ENCODE measurements at regions of chr15 and their contacts with region 1.

Region 1: GRCh38 chr15:101008158-101009139 is 89.3 kb downstream of the LRRK1 start:
- DNase-seq: peak; percentile 82
- H3K4me3 ChIP-seq: peak overlapping the region; percentile 52 to 72 (median 64)
- H3K27ac ChIP-seq: no peak overlapping the region
- H3K4me1 ChIP-seq: peaks cover 24% of the 10 kb centered on the region
- H3K27me3 ChIP-seq: no peaks in the 10 kb centered on the region
- CTCF ChIP-seq: peak; percentile 93 to 99

Region 2: DNA sequence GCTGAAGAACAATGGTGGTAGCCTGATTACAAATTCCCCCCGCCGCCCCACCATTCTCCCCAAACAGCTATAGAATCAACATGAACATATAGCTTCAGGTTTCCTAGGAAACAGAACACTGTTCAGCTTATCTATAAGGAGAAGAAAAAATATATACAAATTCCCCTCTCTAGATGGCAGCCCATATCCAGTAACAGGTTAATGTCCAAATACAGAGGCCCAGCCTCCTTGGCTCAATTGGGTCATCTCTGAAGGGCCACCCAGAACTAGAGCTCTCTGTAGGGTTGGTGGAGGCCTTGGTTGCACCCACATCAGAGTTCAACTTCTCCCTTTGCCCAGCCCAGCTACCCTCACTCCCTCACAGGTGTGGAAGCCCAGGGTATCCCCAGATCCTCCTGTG is 575.1 kb before region 1 on chr15:
- CTCF ChIA-PET with region 1: no interaction called
- dilution Hi-C with region 1: no loop called
- in situ Hi-C with region 1: no loop called
- intact Hi-C with region 1: loop called (anchors 5 kb)
- DNase-seq: peak; percentile 8
- H3K4me3 ChIP-seq: no peak overlapping the region
- H3K27ac ChIP-seq: no peak overlapping the region
- H3K4me1 ChIP-seq: no peaks in the 10 kb centered on the region
- H3K27me3 ChIP-seq: no peaks in the 10 kb centered on the region
- CTCF ChIP-seq: peak in 1 of 2 donors; percentile 30

Region 3: DNA sequence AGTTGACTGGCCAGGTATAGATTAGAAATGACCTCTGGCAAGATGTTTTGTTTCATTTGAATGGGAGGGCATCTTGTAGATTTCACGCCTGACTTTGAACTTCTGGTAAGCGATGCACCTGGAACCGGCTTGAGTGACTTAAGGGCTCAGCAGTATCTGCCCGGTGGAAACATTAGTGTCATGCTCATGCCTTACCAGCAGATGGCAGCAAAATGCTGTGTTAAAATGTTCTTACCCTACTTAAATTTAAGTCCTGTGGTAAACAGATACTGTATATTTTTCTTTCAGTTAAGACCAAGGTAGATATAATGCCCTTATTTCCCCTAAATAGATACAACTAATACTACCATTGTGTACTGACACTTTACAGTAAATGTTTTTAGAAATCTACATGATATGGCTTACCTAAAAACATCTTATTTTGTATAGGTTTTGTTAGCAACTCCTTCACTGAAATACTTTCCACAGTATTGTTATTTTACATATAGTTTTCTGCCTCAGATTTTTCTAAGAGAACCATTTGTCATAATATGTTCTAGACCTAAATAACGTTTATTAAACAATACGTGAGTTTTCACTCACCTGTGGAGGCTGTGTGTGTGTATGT is 380.6 kb before region 1 on chr15:
- CTCF ChIA-PET with region 1: interaction called, 3 read pairs
- dilution Hi-C with region 1: no loop called
- in situ Hi-C with region 1: loop called (anchors 10 kb)
- intact Hi-C with region 1: loop called (anchors 1 kb)
- DNase-seq: peak; percentile 64
- H3K4me3 ChIP-seq: no peak overlapping the region
- H3K27ac ChIP-seq: peak overlapping the region; percentile 5
- H3K4me1 ChIP-seq: no peaks in the 10 kb centered on the region
- H3K27me3 ChIP-seq: no peaks in the 10 kb centered on the region
- CTCF ChIP-seq: peak; percentile 73

Region 4: DNA sequence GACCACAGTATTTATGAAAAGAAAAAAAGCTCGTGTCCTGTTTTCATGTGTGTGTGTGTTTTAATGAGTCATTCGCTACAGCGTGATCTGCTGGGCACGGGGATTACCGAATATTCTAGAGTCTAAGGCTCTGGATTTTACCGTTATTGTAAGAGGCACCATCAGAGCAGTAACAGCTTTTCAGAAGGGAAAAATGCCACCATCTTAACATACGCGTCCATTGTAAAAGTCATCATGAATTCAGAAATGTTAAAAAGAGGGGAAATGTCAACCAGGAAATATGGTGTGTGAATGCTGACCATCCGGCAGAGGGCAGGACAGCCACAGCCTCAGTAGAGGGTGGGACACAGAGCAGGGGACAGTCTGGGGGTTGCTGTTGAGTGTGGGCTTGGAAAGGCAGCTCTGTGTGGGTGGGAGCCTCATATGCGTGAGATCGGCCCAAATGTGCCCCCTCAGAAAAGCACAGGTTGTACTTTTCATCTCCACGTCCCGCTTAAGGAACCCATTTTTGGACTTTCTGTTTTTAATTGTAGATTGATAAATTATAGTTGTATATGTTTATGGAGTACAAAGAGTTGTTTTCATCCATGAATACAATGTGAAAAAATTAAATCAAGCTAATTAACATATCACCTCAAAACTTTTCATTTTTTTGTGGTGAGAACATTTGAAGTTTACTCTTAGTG is 336.4 kb before region 1 on chr15:
- CTCF ChIA-PET with region 1: no interaction called
- dilution Hi-C with region 1: no loop called
- in situ Hi-C with region 1: no loop called
- intact Hi-C with region 1: loop called (anchors 1 kb)
- DNase-seq: peak; percentile 49
- H3K4me3 ChIP-seq: no peak overlapping the region
- H3K27ac ChIP-seq: peak overlapping the region; percentile 37
- H3K4me1 ChIP-seq: peaks cover 7% of the 10 kb centered on the region
- H3K27me3 ChIP-seq: no peaks in the 10 kb centered on the region
- CTCF ChIP-seq: peak; percentile 44 to 66

Region 5: DNA sequence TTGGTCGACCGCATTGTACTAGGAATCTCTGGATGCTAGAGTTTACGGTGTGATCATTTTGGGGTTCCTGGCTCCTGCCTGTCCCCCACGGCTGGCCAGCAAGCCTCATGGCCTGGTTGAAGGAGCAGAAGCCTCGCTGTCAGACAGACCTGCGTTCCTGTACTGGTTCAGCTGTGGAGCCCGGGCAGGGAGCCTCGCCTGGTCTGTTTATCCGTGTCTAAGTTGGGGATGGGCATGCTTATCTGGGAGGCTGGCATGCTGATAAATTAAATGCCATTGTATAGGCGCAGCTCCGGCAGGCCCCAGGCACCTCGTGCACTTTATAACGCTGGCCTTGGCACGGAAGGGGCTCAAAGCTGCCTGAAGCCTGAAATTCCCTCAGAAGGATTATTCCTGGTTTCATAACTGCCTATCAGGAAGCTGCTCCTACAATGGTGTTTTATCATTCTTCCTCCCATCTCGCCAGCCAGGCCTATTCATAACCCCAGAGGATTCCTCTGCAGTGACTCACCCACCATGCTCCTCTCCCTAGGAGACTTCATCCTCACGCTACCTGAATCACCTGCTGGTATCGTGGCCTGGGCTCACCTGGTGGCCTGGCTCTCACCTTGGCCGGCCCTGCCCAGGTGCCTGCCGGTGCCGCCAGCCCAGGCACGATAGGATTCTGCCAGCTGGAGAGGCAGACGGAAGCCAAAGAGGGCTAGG is 295.1 kb before region 1 on chr15:
- CTCF ChIA-PET with region 1: no interaction called
- dilution Hi-C with region 1: no loop called
- in situ Hi-C with region 1: no loop called
- intact Hi-C with region 1: loop called (anchors 2 kb)
- DNase-seq: peak; percentile 100
- H3K4me3 ChIP-seq: no peak overlapping the region
- H3K27ac ChIP-seq: peak overlapping the region; percentile 99
- H3K4me1 ChIP-seq: peaks cover 33% of the 10 kb centered on the region
- H3K27me3 ChIP-seq: no peaks in the 10 kb centered on the region
- CTCF ChIP-seq: no peak

Region 6: GRCh38 chr15:100918034-100918689 is 90.3 kb before region 1 on chr15:
- CTCF ChIA-PET with region 1: interaction called, 24 read pairs
- dilution Hi-C with region 1: no loop called
- in situ Hi-C with region 1: loop called (anchors 5 to 10 kb)
- intact Hi-C with region 1: loop called (anchors 1 kb)
- DNase-seq: peak; percentile 77
- H3K4me3 ChIP-seq: peak overlapping the region; percentile 64 to 72 (median 67)
- H3K27ac ChIP-seq: peak overlapping the region; percentile 48
- H3K4me1 ChIP-seq: peaks cover 39% of the 10 kb centered on the region
- H3K27me3 ChIP-seq: no peaks in the 10 kb centered on the region
- CTCF ChIP-seq: peak; percentile 83 to 94

Region 7: DNA sequence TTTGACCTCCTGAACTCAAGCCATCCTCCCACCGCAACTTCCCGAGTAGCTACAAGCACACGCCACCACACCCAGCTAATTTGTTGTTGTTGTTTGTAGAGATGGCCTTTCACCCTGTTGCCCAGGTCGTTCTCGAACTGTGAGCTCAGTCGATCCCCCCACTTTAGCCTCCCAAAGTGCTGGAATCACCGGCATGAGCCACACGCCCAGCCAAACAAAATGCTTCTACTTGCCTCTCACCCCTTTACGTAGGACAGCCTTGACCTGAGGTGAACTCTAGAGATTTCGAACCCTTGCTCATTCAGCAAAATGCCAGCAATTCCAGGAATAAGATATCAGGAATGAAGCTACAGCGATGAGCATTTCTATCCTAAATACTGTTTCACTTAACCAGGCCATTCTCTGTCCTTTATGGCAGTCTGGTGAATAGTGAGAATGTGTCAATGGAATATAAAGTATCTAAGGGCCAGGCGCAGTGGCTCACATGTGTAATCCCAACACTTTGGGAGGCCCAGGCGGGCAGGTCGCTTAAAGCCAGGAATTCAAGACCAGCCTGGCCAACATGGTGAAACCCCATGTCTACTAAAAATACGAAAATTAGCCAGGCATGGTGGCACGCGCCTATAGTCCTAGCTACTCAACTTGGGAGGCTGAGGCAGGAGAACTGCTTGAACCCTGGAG is 45.8 kb after region 1 on chr15:
- CTCF ChIA-PET with region 1: no interaction called
- dilution Hi-C with region 1: no loop called
- in situ Hi-C with region 1: no loop called
- intact Hi-C with region 1: no loop called
- DNase-seq: no peak
- H3K4me3 ChIP-seq: no peak overlapping the region
- H3K27ac ChIP-seq: no peak overlapping the region
- H3K4me1 ChIP-seq: no peaks in the 10 kb centered on the region
- H3K27me3 ChIP-seq: no peaks in the 10 kb centered on the region
- CTCF ChIP-seq: no peak

Measured in mammary epithelial cell (primary cell).